Left colon (tissue), 2 donors: ENCODE measurements at regions of chr13 and their contacts with region 1.

Region 1: GRCh38 chr13:110412132-110412914 is 105.2 kb downstream of the COL4A2 start:
- DNase-seq: peak; percentile 75 to 77
- ATAC-seq: peak; percentile 86

Region 2: DNA sequence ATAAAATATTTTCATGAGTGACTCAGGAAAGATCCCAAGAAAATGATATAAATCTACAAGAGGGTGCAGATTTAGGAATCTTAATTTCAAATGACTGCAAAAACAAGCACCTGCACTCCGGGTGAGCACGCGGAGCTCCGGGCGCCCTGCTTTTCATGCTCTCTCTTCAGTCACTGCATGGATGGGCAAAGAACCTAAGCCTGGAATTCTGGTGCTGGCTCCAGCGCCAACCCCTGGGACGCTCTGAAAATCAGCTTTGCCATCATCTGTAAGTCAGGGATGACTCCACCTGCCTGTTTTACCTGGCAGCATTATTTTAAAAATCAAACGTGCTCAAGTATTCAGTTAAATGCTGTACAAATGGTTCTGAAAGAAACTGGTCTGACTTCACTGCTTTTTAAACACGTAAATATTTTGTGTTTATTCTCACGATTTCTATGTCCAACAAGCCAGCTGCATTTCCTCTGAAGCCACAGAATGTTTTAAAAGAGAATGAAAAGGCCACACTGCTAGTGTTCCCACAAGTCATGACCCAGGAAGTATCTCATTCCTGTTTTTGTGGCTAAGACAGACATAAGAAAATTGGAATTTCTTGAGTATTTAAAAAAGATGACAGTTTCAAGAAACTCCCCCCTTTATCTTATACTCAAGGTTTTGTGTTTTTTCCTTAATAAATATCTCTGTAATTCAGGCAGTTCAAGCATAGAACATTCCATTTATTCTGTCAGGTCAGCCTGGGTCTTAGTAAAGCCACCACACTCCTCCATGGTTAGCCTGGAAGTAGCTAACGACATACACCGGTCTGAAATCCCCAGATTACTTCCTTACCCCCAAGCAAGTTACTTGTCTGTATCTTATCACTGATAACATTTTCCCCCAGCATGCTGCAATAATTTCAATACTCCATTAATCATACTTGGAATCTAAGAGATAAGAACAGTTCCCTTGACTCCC is 186.4 kb before region 1 on chr13:
- intact Hi-C with region 1: loop called in 1 of 2 experiments (anchors 10 kb)
- DNase-seq: no peak
- ATAC-seq: no peak

Region 3: GRCh38 chr13:110244071-110244830 is 168.1 kb before region 1 on chr13:
- intact Hi-C with region 1: loop called in 1 of 2 experiments (anchors 10 kb)
- DNase-seq: no peak
- ATAC-seq: no peak